AG04449 (cell line): ENCODE measurements at regions of chr1 and their contacts with region 1.

Region 1: DNA sequence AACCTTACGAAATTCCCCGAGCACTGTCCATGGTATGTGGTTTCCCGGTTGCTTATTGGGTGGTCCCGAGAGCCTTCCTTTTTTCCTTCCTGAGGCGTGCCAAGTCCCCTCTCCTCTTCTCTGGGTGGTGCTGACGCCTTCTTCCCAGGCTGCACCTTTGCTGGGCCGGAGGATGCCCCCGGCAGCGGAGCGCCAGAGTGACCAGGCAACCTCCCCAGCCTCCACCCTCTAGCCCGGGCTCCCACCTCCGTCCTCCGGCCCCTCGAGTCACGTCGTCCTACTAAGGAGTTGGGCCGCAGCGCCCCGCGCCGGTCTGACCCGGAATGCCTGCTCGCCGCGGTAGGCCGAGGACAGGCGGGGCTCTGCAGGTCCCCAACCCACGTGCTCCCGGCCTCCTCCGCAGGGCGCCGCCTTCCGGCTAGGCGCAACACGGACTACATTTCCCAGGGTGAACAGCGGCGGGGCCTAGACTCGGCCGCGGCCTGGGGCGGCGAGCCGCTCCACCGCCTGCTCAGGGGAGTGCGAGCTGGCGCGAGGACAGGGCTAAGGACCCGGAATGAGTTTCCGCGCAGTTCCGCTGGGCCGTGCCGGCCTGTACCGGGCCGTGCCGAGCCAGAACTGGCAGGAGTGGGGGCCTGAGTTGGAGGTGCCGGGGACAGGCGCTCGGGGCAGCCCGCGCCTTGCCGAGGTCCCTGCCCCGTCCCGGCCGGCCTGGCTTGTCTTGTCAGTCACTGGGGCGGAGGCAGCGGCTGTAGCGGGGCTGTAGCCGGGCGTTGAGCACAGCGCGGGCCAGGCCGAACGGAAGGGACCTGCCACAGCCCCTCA is at the start of gene IPO13:
- DNase-seq: peak; percentile 38
- H3K4me3 ChIP-seq: peak within 1 kb of the TSS; percentile 86
- CTCF ChIP-seq: peak; percentile 67

Region 2: DNA sequence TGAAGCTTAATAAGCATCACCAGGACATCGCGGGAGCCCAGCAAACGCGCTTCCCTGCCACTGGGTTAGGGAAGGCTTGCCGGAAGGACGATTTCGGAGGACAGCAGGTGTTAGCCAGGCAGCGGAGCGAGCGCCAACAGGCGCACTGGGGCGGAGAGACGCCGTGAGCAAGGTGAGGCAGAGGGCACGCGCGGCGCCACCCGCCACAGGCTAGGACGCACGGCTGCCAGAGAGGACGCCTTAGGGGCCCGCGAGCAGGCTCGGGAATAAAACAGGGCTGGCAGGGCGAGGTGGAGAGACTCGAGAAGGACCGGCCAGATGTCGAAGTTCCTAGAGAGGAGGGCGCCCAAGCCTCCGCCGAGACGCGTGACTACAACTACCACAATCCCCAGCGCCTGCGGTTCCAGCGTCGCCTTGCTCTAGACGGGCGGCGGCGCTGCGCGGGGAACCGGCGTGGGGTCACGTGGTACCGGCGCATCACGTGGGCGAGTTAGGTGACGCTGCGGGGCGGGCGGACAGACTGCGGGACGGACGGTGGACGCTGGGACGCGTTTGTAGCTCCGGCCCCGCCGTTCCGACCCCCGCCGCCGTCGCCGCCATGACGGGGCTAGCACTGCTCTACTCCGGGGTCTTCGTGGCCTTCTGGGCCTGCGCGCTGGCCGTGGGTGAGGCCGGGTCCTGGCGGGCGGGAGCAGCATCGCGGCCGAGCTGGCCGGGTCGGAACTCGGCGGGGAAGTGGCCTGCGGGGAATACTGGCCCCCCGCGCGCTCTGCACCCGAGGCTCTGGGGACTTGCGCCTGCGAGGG is 28.2 kb after region 1 on chr1 and contains the start of gene ATP6V0B:
- CTCF ChIA-PET with region 1: interaction called, 11 read pairs
- POLR2A ChIA-PET with region 1: interaction called, 4 read pairs
- DNase-seq: peak; percentile 28
- H3K4me3 ChIP-seq: peak within 1 kb of the TSS; percentile 85
- CTCF ChIP-seq: peak; percentile 36

Region 3: GRCh38 chr1:44101356-44101755 is 154.9 kb after region 1 on chr1:
- CTCF ChIA-PET with region 1: no interaction called
- POLR2A ChIA-PET with region 1: no interaction called
- DNase-seq: no peak
- H3K4me3 ChIP-seq: no peak overlapping the region
- CTCF ChIP-seq: no peak